Naive thymus-derived CD4-positive, alpha-beta T cell (primary cell): ENCODE measurements at regions of chr6 and their contacts with region 1.

Region 1: DNA sequence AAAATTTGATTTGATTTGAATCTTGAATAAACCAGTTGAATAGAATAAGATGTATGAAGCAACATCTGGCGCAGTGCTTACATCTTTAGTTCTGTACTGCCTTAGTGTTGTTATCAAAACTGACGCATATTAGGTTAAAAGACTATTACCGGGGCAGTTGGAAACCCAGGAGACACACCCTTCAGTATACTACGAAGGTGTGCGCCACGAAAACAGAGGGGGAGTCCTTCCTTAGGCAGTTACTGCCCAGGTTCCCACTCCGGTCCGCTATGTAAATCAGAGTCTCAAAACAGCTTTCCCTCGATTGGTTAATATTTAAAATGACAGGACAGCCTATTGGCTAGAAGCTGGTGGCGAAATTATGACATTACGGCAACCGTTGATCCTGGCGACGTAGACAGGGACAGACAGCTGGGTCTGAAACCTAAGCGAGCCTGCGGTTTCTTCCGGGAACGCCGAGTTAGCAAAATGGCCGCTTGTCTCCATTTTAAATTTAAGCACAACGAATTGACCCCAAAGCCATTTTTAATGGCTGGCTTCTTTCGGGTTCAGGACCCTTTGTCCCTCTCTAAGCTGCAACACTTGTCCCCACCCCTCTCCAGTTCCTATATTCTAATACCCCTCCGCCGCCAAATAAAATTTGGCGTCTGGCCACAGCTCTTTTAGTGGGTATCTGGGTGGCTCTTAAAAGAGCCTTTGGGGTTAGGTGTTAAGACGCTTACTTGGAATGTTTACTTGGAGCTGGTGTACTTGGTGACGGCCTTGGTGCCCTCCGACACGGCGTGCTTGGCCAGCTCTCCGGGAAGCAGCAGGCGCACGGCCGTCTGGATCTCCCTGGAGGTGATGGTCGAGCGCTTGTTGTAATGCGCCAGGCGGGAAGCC is 35.8 kb downstream of the HFE start:
- DNase-seq: peak; percentile 68 to 99 (median 96)
- ATAC-seq: peak; percentile 78
- H3K4me3 ChIP-seq: peak overlapping the region; percentile 94
- H3K4me3 Mint-ChIP-seq: peak overlapping the region; percentile 92 to 100 (median 98)
- H3K27ac ChIP-seq: peak overlapping the region; percentile 86
- H3K27ac Mint-ChIP-seq: peak overlapping the region; percentile 97 to 100 (median 99)
- H3K4me1 ChIP-seq: peaks cover 18 to 23% of the 10 kb centered on the region in 2 donors
- H3K4me1 Mint-ChIP-seq: peaks cover 22 to 54% (median 30%) of the 10 kb centered on the region in 7 donors
- H3K27me3 ChIP-seq: no peaks in the 10 kb centered on the region
- H3K27me3 Mint-ChIP-seq: peaks cover 0 to 21% (median 0%) of the 10 kb centered on the region in 5 donors

Region 2: GRCh38 chr6:26065952-26066380 is 57.1 kb before region 1 on chr6:
- CTCF ChIA-PET with region 1: interaction called, 7 read pairs
- POLR2A ChIA-PET with region 1: interaction called, 267 read pairs
- intact Hi-C with region 1: loop called in 1 of 2 experiments (anchors 1 kb)
- DNase-seq: peak in 7 of 9 donors; percentile 51 to 74 (median 61)
- ATAC-seq: peak; percentile 97
- H3K4me3 ChIP-seq: no peak overlapping the region
- H3K4me3 Mint-ChIP-seq: no peak overlapping the region
- H3K27ac ChIP-seq: no peak overlapping the region
- H3K27ac Mint-ChIP-seq: no peak overlapping the region
- H3K4me1 ChIP-seq: no peaks in the 10 kb centered on the region
- H3K4me1 Mint-ChIP-seq: peaks cover 1 to 22% (median 11%) of the 10 kb centered on the region in 7 donors
- H3K27me3 ChIP-seq: no peaks in the 10 kb centered on the region
- H3K27me3 Mint-ChIP-seq: peaks cover 0 to 39% (median 0%) of the 10 kb centered on the region in 5 donors

Region 3: GRCh38 chr6:26141378-26141904 is 18.4 kb after region 1 on chr6:
- CTCF ChIA-PET with region 1: no interaction called
- POLR2A ChIA-PET with region 1: interaction called, 132 read pairs
- intact Hi-C with region 1: no loop called
- DNase-seq: no peak
- ATAC-seq: no peak
- H3K4me3 ChIP-seq: no peak overlapping the region
- H3K4me3 Mint-ChIP-seq: no peak overlapping the region
- H3K27ac ChIP-seq: no peak overlapping the region
- H3K27ac Mint-ChIP-seq: peak overlapping the region in 3 of 9 donors; percentile 13 to 59 (median 38)
- H3K4me1 ChIP-seq: no peaks in the 10 kb centered on the region
- H3K4me1 Mint-ChIP-seq: peaks cover 2 to 17% (median 9%) of the 10 kb centered on the region in 7 donors
- H3K27me3 ChIP-seq: no peaks in the 10 kb centered on the region
- H3K27me3 Mint-ChIP-seq: peaks cover 0 to 2% (median 0%) of the 10 kb centered on the region in 5 donors

Region 4: GRCh38 chr6:26196846-26197648 is 74.0 kb after region 1 on chr6:
- CTCF ChIA-PET with region 1: interaction called, 10 read pairs
- POLR2A ChIA-PET with region 1: interaction called, 764 read pairs
- intact Hi-C with region 1: loop called (anchors 1 kb)
- DNase-seq: peak; percentile 55 to 95 (median 93)
- ATAC-seq: peak; percentile 73
- H3K4me3 ChIP-seq: peak overlapping the region; percentile 92
- H3K4me3 Mint-ChIP-seq: peak overlapping the region; percentile 85 to 99 (median 96)
- H3K27ac ChIP-seq: peak overlapping the region; percentile 91
- H3K27ac Mint-ChIP-seq: peak overlapping the region; percentile 96 to 100 (median 98)
- H3K4me1 ChIP-seq: peaks cover 10 to 12% of the 10 kb centered on the region in 2 donors
- H3K4me1 Mint-ChIP-seq: peaks cover 23 to 65% (median 42%) of the 10 kb centered on the region in 7 donors
- H3K27me3 ChIP-seq: no peaks in the 10 kb centered on the region
- H3K27me3 Mint-ChIP-seq: peaks cover 0 to 12% (median 0%) of the 10 kb centered on the region in 5 donors

Region 5: GRCh38 chr6:26270903-26271667 is 148.1 kb after region 1 on chr6:
- CTCF ChIA-PET with region 1: no interaction called
- POLR2A ChIA-PET with region 1: interaction called, 137 read pairs
- intact Hi-C with region 1: loop called (anchors 1 kb)
- DNase-seq: peak; percentile 50 to 89 (median 85)
- ATAC-seq: peak; percentile 24
- H3K4me3 ChIP-seq: peak overlapping the region; percentile 83
- H3K4me3 Mint-ChIP-seq: no peak overlapping the region
- H3K27ac ChIP-seq: peak overlapping the region; percentile 82
- H3K27ac Mint-ChIP-seq: peak overlapping the region in 2 of 9 donors; percentile 10 to 91
- H3K4me1 ChIP-seq: peaks cover 6 to 27% of the 10 kb centered on the region in 2 donors
- H3K4me1 Mint-ChIP-seq: peaks cover 0 to 34% (median 15%) of the 10 kb centered on the region in 7 donors
- H3K27me3 ChIP-seq: no peaks in the 10 kb centered on the region
- H3K27me3 Mint-ChIP-seq: no peaks in the 10 kb centered on the region

Region 6: DNA sequence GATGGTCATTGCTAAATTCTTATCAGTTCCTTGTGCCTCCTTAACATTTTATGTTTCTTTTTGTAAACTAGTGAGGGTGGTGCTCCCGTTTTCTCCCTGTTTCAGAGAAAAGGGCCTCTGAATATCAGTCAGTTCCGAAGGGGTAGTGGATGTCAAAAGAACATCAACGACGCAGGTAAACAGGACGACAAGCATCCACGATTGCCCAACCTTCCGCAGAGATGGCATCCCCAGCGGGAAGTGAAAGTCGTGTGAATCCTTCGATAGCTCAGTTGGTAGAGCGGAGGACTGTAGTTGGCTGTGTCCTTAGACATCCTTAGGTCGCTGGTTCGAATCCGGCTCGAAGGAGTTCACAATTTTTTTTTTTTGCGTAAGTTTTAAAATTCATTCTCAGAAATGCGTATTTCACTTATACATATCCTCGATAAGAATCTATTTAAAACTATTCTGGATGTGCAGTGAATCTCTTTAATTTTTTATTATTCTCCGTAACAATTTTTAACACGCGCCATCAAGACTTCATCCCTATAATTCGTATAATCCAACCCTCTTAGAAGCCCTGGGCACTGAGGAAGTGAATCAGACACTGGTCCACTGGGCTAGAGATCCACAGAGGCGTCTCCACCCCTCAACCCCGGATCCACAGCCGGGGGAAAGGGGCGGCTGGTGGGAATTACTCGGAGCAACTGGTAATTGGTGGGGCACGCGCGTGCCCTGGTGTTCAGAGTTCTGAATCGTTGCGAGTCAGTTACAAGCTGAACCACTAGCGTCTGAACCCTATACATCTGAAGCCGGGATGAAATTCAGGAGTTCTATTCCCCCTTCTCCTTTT is 445.8 kb after region 1 on chr6:
- CTCF ChIA-PET with region 1: no interaction called
- POLR2A ChIA-PET with region 1: no interaction called
- intact Hi-C with region 1: no loop called
- DNase-seq: peak; percentile 96 to 99 (median 98)
- ATAC-seq: peak; percentile 84
- H3K4me3 ChIP-seq: peak overlapping the region; percentile 90
- H3K4me3 Mint-ChIP-seq: peak overlapping the region; percentile 90 to 100 (median 95)
- H3K27ac ChIP-seq: peak overlapping the region; percentile 74
- H3K27ac Mint-ChIP-seq: peak overlapping the region; percentile 96 to 100 (median 99)
- H3K4me1 ChIP-seq: peaks cover 0 to 3% of the 10 kb centered on the region in 2 donors
- H3K4me1 Mint-ChIP-seq: peaks cover 11 to 42% (median 26%) of the 10 kb centered on the region in 7 donors
- H3K27me3 ChIP-seq: no peaks in the 10 kb centered on the region
- H3K27me3 Mint-ChIP-seq: peaks cover 0 to 12% (median 0%) of the 10 kb centered on the region in 5 donors

Region 7: DNA sequence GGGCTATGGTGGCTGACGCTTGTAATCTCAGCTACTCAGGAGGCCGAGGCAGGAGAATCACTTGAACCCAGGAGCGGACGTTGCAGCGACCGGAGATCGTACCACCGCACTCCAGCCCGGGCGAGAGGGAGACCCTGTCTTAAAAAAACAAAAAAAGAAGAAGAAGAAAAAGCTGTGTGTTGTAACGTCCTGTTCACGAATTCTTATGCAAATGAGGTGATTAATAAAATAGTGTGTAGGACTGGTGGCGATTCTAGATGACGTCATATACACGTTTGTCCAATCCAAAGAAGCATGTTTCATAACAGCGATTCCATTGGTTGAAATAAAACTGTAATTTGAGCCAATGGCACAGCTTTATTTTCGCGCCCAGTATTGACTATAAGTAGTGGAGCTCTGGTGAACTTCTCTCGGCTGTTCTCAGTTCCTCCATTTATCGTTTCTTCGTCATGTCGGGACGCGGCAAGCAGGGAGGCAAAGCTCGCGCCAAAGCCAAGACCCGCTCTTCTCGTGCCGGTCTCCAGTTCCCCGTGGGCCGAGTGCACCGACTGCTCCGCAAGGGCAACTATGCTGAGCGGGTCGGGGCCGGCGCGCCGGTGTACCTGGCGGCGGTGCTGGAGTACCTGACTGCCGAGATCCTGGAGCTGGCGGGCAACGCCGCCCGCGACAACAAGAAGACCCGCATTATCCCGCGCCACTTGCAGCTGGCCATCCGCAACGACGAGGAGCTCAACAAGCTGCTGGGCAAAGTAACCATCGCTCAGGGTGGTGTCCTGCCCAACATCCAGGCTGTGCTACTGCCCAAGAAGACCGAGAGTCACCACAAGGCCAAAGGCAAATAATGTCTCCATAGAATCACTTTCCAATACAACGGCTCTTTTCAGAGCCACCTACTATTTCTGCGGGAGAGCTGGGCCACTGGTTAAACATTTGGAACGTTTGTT is 1742.1 kb after region 1 on chr6:
- CTCF ChIA-PET with region 1: no interaction called
- POLR2A ChIA-PET with region 1: interaction called, 56 read pairs
- intact Hi-C with region 1: no loop called
- DNase-seq: peak; percentile 56 to 93 (median 89)
- ATAC-seq: peak; percentile 85
- H3K4me3 ChIP-seq: peak overlapping the region; percentile 74
- H3K4me3 Mint-ChIP-seq: peak overlapping the region; percentile 85 to 99 (median 97)
- H3K27ac ChIP-seq: peak overlapping the region; percentile 71
- H3K27ac Mint-ChIP-seq: peak overlapping the region; percentile 88 to 98 (median 95)
- H3K4me1 ChIP-seq: peaks cover 8 to 25% of the 10 kb centered on the region in 2 donors
- H3K4me1 Mint-ChIP-seq: peaks cover 22 to 64% (median 46%) of the 10 kb centered on the region in 7 donors
- H3K27me3 ChIP-seq: no peaks in the 10 kb centered on the region
- H3K27me3 Mint-ChIP-seq: peaks cover 0 to 16% (median 0%) of the 10 kb centered on the region in 5 donors